ENCODE measurements at regions of chr1 and their contacts with region 1.

Region 1: DNA sequence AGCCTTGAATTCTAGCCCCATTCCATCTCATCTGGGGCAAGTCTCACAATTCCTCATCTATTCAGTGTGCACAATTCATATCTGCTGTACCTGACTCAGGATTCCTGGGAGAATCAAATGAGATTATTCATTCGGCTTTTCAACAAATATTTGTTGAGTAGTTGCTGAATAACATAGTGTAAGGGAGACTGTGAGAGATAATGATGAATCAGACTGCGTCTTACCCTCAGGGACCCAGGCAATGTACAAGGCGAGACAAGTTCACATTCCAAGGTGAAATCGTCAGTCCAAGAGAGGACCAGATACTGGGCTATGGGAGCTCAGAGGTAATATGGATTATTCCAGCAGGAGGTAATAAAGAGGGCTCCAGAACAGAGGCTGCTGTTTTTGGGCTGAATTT is 67.8 kb upstream of the SMYD2 start:
- DNase-seq: no peak
- H3K4me3 ChIP-seq: no peak overlapping the region
- H3K27ac ChIP-seq: no peak overlapping the region
- H3K27me3 ChIP-seq: peaks cover 0 to 4% (median 0%) of the 10 kb centered on the region in 45 donors
- CTCF ChIP-seq: no peak

Region 2: GRCh38 chr1:214261206-214262123 is 48.3 kb after region 1 on chr1:
- intact Hi-C with region 1: loop called in 1 of 2 experiments (anchors 5 kb)
- DNase-seq: peak; percentile 74 to 91 (median 84)
- H3K4me3 ChIP-seq: peak overlapping the region in 26 of 59 donors; percentile 2 to 46 (median 24)
- H3K27ac ChIP-seq: no peak overlapping the region
- H3K27me3 ChIP-seq: peaks cover 0 to 39% (median 15%) of the 10 kb centered on the region in 45 donors
- CTCF ChIP-seq: peak; percentile 46 to 98 (median 90)

Region 3: DNA sequence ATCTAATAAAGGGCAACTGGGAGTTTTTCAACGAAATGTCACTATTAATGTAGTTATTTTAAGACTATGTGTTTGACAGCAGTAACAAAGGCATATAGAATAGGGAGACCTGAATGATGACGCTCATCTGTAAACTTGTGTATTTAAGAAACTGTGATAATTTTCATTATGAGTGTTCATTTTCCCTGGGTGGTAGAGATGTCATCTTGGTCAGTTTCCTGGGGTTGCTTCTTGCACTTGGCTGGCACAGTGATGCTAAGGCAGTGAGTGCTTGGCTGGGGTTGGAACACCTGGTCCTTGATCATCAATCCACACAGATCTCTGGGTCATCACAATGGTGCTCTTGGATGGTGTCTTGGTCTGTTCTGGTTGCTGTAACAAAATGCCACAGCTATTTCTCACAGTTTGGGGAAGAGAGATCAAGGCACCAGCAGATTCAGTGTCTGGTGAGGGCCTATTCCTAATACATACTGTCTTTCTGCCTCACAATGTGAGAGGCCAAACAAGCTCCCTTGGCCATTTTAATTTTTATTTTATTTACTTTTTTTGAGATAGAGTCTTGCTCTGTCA is 59.9 kb after region 1 on chr1:
- intact Hi-C with region 1: no loop called
- DNase-seq: no peak
- H3K4me3 ChIP-seq: no peak overlapping the region
- H3K27ac ChIP-seq: no peak overlapping the region
- H3K27me3 ChIP-seq: peaks cover 0 to 26% (median 5%) of the 10 kb centered on the region in 45 donors
- CTCF ChIP-seq: no peak

Region 4: GRCh38 chr1:214404154-214404553 is 191.0 kb after region 1 on chr1:
- intact Hi-C with region 1: no loop called
- DNase-seq: no peak
- H3K4me3 ChIP-seq: no peak overlapping the region
- H3K27ac ChIP-seq: no peak overlapping the region
- H3K27me3 ChIP-seq: no peaks in the 10 kb centered on the region
- CTCF ChIP-seq: no peak

Region 5: GRCh38 chr1:214632091-214632490 is 419.0 kb after region 1 on chr1:
- intact Hi-C with region 1: loop called (anchors 5 to 10 kb)
- DNase-seq: no peak
- H3K4me3 ChIP-seq: no peak overlapping the region
- H3K27ac ChIP-seq: no peak overlapping the region
- H3K27me3 ChIP-seq: peaks cover 0 to 4% (median 0%) of the 10 kb centered on the region in 45 donors
- CTCF ChIP-seq: no peak

Region 6: GRCh38 chr1:214637722-214638458 is 424.8 kb after region 1 on chr1:
- intact Hi-C with region 1: loop called in 1 of 2 experiments (anchors 10 kb)
- DNase-seq: peak in 2 of 10 donors; percentile 25 to 31
- H3K4me3 ChIP-seq: no peak overlapping the region
- H3K27ac ChIP-seq: no peak overlapping the region
- H3K27me3 ChIP-seq: peaks cover 0 to 8% (median 0%) of the 10 kb centered on the region in 45 donors
- CTCF ChIP-seq: peak; percentile 35 to 81 (median 67)

Region 7: GRCh38 chr1:215526553-215527151 is 1313.5 kb after region 1 on chr1:
- intact Hi-C with region 1: loop called (anchors 5 to 10 kb)
- DNase-seq: no peak
- H3K4me3 ChIP-seq: peak overlapping the region in 1 of 59 donors; percentile 6
- H3K27ac ChIP-seq: no peak overlapping the region
- H3K27me3 ChIP-seq: peaks cover 0 to 13% (median 0%) of the 10 kb centered on the region in 45 donors
- CTCF ChIP-seq: peak; percentile 71 to 97 (median 86)